ENCODE measurements at regions of chr9 and their contacts with region 1.

Region 1: GRCh38 chr9:113275157-113276131 is at the starts of genes CDC26 and PRPF4:
- DNase-seq: peak; percentile 95
- ATAC-seq: peak; percentile 89
- H3K4me3 ChIP-seq: peak within 1 kb of the TSS; percentile 75 to 98 (median 84)
- H3K4me3 Mint-ChIP-seq: no peak within 1 kb of the TSS
- H3K27ac ChIP-seq: peak within 1 kb of the TSS; percentile 94 to 97
- H3K27ac Mint-ChIP-seq: no peak within 1 kb of the TSS
- H3K4me1 ChIP-seq: peaks cover 9 to 16% of the 10 kb centered on the region in 2 donors
- H3K4me1 Mint-ChIP-seq: peaks cover 12% of the 10 kb centered on the region
- H3K27me3 ChIP-seq: no peaks in the 10 kb centered on the region
- H3K27me3 Mint-ChIP-seq: no peaks in the 10 kb centered on the region
- CTCF ChIP-seq: no peak
- total RNA-seq, gene CDC26: 28.9 and 32.9 TPM in 2 replicates
- total RNA-seq, gene PRPF4: 28.2 and 30.8 TPM in 2 replicates

Region 2: DNA sequence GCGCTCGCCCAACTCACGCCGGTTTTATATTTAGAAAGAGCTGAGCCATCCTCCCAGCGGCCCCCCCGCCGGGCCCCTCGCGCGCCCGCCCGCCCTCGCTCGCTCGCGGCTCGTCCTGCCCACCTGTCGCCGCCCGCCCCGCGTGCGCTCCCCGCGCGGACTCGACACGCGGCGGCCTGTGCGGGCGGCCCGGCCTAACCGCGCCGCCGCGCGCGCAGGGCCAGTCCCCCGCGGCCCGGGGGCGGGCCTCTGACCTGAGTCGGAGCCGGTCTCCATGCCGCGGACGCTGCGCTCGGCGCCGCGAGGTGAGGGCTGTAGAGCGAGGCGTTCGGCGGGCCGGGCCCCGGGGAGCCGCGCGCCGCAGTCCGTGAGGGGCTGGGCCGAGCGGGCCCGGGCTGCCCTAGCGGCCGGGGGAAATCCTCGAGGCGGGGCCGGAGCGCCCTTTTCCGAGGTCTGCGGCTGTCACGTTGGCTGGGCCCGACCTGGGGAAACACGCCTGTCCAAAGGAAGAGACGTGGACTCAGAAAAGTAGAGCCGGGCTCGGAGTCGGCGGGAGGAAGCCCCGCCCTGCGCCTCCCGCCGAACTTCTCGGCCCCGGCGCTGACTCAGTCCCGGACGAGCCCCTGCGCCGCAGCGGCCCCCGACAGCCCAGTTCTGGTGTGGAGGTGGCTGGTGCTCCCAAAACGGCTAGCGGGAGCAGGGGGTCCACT is 1791.4 kb before region 1 on chr9 and contains the start of gene ECPAS:
- CTCF ChIA-PET with region 1: no interaction called
- POLR2A ChIA-PET with region 1: no interaction called
- intact Hi-C with region 1: loop called (anchors 5 kb)
- DNase-seq: peak; percentile 83
- ATAC-seq: peak; percentile 60
- H3K4me3 ChIP-seq: peak within 1 kb of the TSS; percentile 68 to 92 (median 86)
- H3K4me3 Mint-ChIP-seq: peak within 1 kb of the TSS; percentile 78
- H3K27ac ChIP-seq: peak within 1 kb of the TSS; percentile 73 to 85
- H3K27ac Mint-ChIP-seq: peak within 1 kb of the TSS; percentile 70
- H3K4me1 ChIP-seq: peaks cover 7 to 9% of the 10 kb centered on the region in 2 donors
- H3K4me1 Mint-ChIP-seq: peaks cover 27% of the 10 kb centered on the region
- H3K27me3 ChIP-seq: peaks cover 0 to 2% (median 0%) of the 10 kb centered on the region in 4 experiments
- H3K27me3 Mint-ChIP-seq: peaks cover 7% of the 10 kb centered on the region
- CTCF ChIP-seq: no peak
- total RNA-seq, gene ECPAS: 66.7 and 69.5 TPM in 2 replicates

Region 3: GRCh38 chr9:113221003-113221799 is 54.2 kb before region 1 on chr9 and contains the starts of genes FKBP15 and SLC31A1:
- CTCF ChIA-PET with region 1: interaction called, 39 read pairs
- POLR2A ChIA-PET with region 1: interaction called, 9 read pairs
- intact Hi-C with region 1: loop called (anchors 1 kb)
- DNase-seq: peak; percentile 98
- ATAC-seq: peak; percentile 98
- H3K4me3 ChIP-seq: peak within 1 kb of the TSS; percentile 77 to 97 (median 94)
- H3K4me3 Mint-ChIP-seq: peak within 1 kb of the TSS; percentile 95
- H3K27ac ChIP-seq: peak within 1 kb of the TSS; percentile 59 to 84
- H3K27ac Mint-ChIP-seq: peak within 1 kb of the TSS; percentile 95
- H3K4me1 ChIP-seq: peaks cover 33 to 35% of the 10 kb centered on the region in 2 donors
- H3K4me1 Mint-ChIP-seq: peaks cover 48% of the 10 kb centered on the region
- H3K27me3 ChIP-seq: no peaks in the 10 kb centered on the region
- H3K27me3 Mint-ChIP-seq: no peaks in the 10 kb centered on the region
- CTCF ChIP-seq: no peak
- total RNA-seq, gene FKBP15: 40.6 and 41.2 TPM in 2 replicates
- total RNA-seq, gene SLC31A1: 3.2 and 3.5 TPM in 2 replicates

Region 4: GRCh38 chr9:113331780-113332179 is 56.3 kb after region 1 on chr9:
- CTCF ChIA-PET with region 1: no interaction called
- POLR2A ChIA-PET with region 1: no interaction called
- intact Hi-C with region 1: no loop called
- DNase-seq: no peak
- ATAC-seq: no peak
- H3K4me3 ChIP-seq: no peak overlapping the region
- H3K4me3 Mint-ChIP-seq: no peak overlapping the region
- H3K27ac ChIP-seq: no peak overlapping the region
- H3K27ac Mint-ChIP-seq: no peak overlapping the region
- H3K4me1 ChIP-seq: no peaks in the 10 kb centered on the region
- H3K4me1 Mint-ChIP-seq: no peaks in the 10 kb centered on the region
- H3K27me3 ChIP-seq: no peaks in the 10 kb centered on the region
- H3K27me3 Mint-ChIP-seq: peaks cover 4% of the 10 kb centered on the region
- CTCF ChIP-seq: no peak

Region 5: GRCh38 chr9:113401027-113401792 is 125.8 kb after region 1 on chr9 and contains the start of gene ALAD:
- CTCF ChIA-PET with region 1: interaction called, 81 read pairs
- POLR2A ChIA-PET with region 1: no interaction called
- intact Hi-C with region 1: loop called (anchors 1 kb)
- DNase-seq: peak; percentile 99
- ATAC-seq: peak; percentile 99
- H3K4me3 ChIP-seq: peak within 1 kb of the TSS; percentile 60 to 98 (median 82)
- H3K4me3 Mint-ChIP-seq: peak within 1 kb of the TSS; percentile 98
- H3K27ac ChIP-seq: peak within 1 kb of the TSS; percentile 18 to 73
- H3K27ac Mint-ChIP-seq: peak within 1 kb of the TSS; percentile 93
- H3K4me1 ChIP-seq: peaks cover 10 to 18% of the 10 kb centered on the region in 2 donors
- H3K4me1 Mint-ChIP-seq: peaks cover 28% of the 10 kb centered on the region
- H3K27me3 ChIP-seq: no peaks in the 10 kb centered on the region
- H3K27me3 Mint-ChIP-seq: no peaks in the 10 kb centered on the region
- CTCF ChIP-seq: peak; percentile 93
- total RNA-seq, gene ALAD: 39.8 and 40.1 TPM in 2 replicates

Region 6: GRCh38 chr9:113578882-113579282 is 303.4 kb after region 1 on chr9:
- CTCF ChIA-PET with region 1: interaction called, 31 read pairs
- POLR2A ChIA-PET with region 1: interaction called, 6 read pairs
- intact Hi-C with region 1: loop called (anchors 1 kb)
- DNase-seq: peak; percentile 76
- ATAC-seq: peak; percentile 46
- H3K4me3 ChIP-seq: peak overlapping the region in 1 of 5 experiments; percentile 9
- H3K4me3 Mint-ChIP-seq: peak overlapping the region; percentile 86
- H3K27ac ChIP-seq: peak overlapping the region; percentile 71 to 85
- H3K27ac Mint-ChIP-seq: peak overlapping the region; percentile 96
- H3K4me1 ChIP-seq: peaks cover 51 to 69% of the 10 kb centered on the region in 2 donors
- H3K4me1 Mint-ChIP-seq: peaks cover 72% of the 10 kb centered on the region
- H3K27me3 ChIP-seq: peaks cover 0 to 2% (median 0%) of the 10 kb centered on the region in 4 experiments
- H3K27me3 Mint-ChIP-seq: no peaks in the 10 kb centered on the region
- CTCF ChIP-seq: no peak

Region 7: DNA sequence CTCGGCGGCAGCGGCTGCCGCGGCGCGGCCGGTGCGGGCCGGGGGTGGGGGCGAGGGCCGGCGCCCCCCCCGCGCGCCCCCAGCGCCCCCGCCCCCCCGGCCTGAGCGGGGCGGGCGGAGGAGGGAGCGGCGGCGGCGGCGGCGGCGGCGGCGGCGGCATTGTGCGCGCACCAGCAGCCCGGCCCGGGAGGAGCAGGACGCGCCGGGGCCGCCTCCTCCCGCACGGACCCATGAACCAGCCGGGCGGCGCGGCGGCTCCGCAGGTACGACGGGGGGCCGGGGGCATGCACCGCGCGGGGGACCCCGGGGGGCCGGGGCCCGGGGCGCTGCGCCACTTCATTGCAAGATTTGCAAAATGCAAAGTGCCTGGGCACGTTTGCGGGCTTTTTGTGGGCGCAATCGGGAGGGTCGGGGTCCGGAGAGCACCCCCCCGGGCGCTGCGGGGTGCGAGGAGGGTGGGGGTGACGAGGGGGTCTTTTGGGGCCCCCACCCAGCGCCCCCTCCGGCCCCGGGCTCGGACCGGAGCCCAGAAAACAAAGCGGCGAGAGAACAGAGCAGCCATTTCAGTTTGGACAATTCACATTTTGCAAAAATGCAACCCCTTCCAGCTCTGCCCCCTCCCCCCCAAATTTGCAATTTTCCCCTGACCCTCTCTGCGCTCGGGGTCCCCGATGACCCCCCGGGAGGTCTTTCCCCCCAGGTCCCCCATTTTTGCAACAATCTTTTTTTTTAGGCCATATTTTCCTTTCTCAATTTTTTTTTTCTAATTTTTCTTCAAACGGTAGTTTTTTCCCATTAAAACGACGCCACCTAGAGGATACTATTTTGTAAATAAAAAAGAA is 600.9 kb after region 1 on chr9 and contains the start of gene ZNF618:
- CTCF ChIA-PET with region 1: no interaction called
- POLR2A ChIA-PET with region 1: no interaction called
- intact Hi-C with region 1: loop called (anchors 10 kb)
- DNase-seq: peak; percentile 41
- ATAC-seq: peak; percentile 72
- H3K4me3 ChIP-seq: peak within 1 kb of the TSS; percentile 34 to 90 (median 70)
- H3K4me3 Mint-ChIP-seq: peak within 1 kb of the TSS; percentile 92
- H3K27ac ChIP-seq: no peak within 1 kb of the TSS
- H3K27ac Mint-ChIP-seq: peak within 1 kb of the TSS; percentile 11
- H3K4me1 ChIP-seq: peaks cover 0 to 3% of the 10 kb centered on the region in 2 donors
- H3K4me1 Mint-ChIP-seq: peaks cover 4% of the 10 kb centered on the region
- H3K27me3 ChIP-seq: peaks cover 0 to 3% (median 0%) of the 10 kb centered on the region in 4 experiments
- H3K27me3 Mint-ChIP-seq: peaks cover 33% of the 10 kb centered on the region
- CTCF ChIP-seq: peak; percentile 67
- total RNA-seq, gene ZNF618: 2.5 and 3.0 TPM in 2 replicates